HepG2 (cell line): ENCODE measurements at regions of chr14 and their contacts with region 1.

Region 1: DNA sequence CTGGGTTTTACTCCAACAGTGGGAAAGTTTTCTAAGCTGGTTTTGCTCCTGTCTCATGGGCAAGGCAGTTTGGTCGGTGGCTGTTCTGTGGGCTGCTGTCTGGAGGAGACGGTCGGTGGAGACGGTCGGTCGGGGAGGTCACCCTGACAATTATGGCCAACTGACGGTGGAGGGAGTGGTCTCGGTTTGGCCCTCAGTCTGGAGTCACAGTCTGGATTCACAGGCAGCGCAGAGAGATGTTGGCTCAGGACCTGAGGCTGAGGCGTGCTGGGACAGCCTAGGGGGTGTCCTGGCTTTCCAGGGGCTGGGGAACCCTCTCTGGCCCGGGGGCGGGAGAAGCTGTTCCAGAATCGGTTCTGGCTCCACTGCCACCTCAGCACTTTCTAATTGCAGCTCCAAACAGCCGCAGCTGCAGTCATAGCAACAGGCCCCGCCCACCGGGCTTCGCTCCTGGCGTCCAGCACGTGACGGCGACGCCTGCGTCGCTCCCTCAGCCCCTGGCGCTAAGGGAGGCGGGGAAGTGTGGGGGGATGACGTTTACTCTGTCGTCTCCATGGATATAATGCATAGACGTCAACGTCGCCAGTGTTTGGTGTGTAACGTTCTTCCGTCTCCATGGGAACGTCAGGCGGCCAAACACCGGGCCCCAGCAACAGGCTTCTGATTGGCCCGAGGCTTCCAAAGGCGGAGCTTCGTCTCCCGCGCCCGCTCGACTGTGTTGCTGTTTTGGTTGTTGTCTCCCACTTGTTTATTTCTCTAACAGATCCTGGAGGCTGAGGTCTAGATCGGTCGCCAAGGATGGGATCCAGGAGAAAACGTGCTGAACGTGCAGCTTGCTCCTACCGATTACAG is 19.8 kb upstream of the FOS start:
- DNase-seq: peak; percentile 96
- ATAC-seq: peak; percentile 90
- H3K4me3 ChIP-seq: peak overlapping the region; percentile 51 to 76 (median 62)
- H3K27ac ChIP-seq: peak overlapping the region; percentile 80
- H3K4me1 ChIP-seq: peaks cover 49% of the 10 kb centered on the region
- H3K27me3 ChIP-seq: peaks cover 0 to 18% of the 10 kb centered on the region in 2 experiments; a peak in 2 of 5 replicates
- CTCF ChIP-seq: peak; percentile 14; the same call in 1 of the 2 replicates
- EP300 ChIP-seq: peak; percentile 86 to 98
- POLR2A ChIP-seq: peak in 1 of 2 experiments; percentile 82; a peak in 2 of 4 replicates
- RAD21 ChIP-seq: no peak

Region 2: GRCh38 chr14:75176142-75176820 is 82.6 kb before region 1 on chr14 and contains the start of gene TMED10:
- CTCF ChIA-PET with region 1: no interaction called
- POLR2A ChIA-PET with region 1: interaction called, 6 read pairs
- in situ Hi-C with region 1: no loop called
- intact Hi-C with region 1: loop called (anchors 5 kb)
- DNase-seq: peak; percentile 81
- ATAC-seq: peak; percentile 86
- H3K4me3 ChIP-seq: peak within 1 kb of the TSS; percentile 83 to 98 (median 93)
- H3K27ac ChIP-seq: peak within 1 kb of the TSS; percentile 99
- H3K4me1 ChIP-seq: peaks cover 38% of the 10 kb centered on the region
- H3K27me3 ChIP-seq: no peaks in the 10 kb centered on the region; a peak in 1 of 5 replicates
- CTCF ChIP-seq: peak; percentile 57
- EP300 ChIP-seq: no peak
- POLR2A ChIP-seq: peak; percentile 83 to 87
- RAD21 ChIP-seq: peak; percentile 42; the same call in 1 of the 2 replicates
- total RNA-seq, gene TMED10: 183 and 311 TPM in 2 replicates

Region 3: GRCh38 chr14:75278422-75279161 is 19.8 kb after region 1 on chr14 and contains the start of gene FOS:
- CTCF ChIA-PET with region 1: no interaction called
- POLR2A ChIA-PET with region 1: no interaction called
- in situ Hi-C with region 1: no loop called
- intact Hi-C with region 1: loop called (anchors 2 kb)
- DNase-seq: peak; percentile 89
- ATAC-seq: peak; percentile 76
- H3K4me3 ChIP-seq: peak within 1 kb of the TSS; percentile 74 to 96 (median 84)
- H3K27ac ChIP-seq: peak within 1 kb of the TSS; percentile 87
- H3K4me1 ChIP-seq: peaks cover 53% of the 10 kb centered on the region
- H3K27me3 ChIP-seq: peaks cover 1 to 30% of the 10 kb centered on the region in 2 experiments; a peak in 3 of 5 replicates
- CTCF ChIP-seq: no peak; the same call in 1 of the 2 replicates
- EP300 ChIP-seq: no peak; a peak in 1 of 4 replicates
- POLR2A ChIP-seq: peak; percentile 99
- RAD21 ChIP-seq: peak; percentile 39; the same call in 1 of the 2 replicates
- total RNA-seq, gene FOS: 4.3 and 24.2 TPM in 2 replicates